ENCODE measurements at regions of chr11 and their contacts with region 1.

Region 1: GRCh38 chr11:122020902-122021301 is 95.1 kb downstream of the BLID start:
- DNase-seq: no peak
- ATAC-seq: no peak

Region 2: DNA sequence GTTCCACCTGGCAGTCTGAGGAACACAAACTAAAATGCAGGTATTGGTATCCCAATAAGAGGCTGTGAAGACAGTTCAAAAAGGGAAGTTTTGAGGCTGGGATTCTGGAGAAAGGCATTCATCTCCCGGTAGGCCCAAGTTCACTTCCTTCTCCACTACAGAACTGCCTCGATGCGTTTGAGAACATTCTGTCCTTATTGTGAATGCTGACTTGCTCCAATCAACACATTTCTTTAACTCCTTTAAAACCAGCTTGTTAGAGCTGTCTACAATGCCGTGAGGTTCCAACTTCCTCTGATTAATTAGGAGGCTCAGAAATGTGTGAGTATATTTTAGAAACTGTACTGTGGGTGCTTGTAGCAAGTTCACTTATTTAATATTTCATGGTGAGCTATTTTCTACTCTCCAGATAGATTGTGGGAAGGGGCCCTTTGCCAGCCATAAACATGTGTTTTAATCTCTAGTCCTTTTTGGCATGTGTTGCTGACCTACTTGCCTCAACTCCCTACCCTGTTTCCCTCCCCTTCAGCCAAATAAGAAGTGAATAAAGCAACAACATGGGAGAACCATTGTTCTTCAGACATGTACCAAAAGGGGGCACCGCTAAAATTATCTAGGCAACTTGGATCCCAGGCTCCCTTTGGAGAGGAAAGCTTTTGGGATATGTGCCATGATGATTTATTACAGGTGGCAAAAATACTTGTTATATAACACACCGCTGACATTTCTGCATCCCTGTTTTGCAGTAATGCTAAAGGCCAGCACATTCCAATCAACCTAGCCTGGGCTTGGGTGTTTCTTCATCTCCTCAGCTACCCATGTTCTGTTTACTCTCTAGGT is 150.5 kb before region 1 on chr11:
- intact Hi-C with region 1: no loop called
- DNase-seq: no peak
- ATAC-seq: peak; percentile 77

Region 3: DNA sequence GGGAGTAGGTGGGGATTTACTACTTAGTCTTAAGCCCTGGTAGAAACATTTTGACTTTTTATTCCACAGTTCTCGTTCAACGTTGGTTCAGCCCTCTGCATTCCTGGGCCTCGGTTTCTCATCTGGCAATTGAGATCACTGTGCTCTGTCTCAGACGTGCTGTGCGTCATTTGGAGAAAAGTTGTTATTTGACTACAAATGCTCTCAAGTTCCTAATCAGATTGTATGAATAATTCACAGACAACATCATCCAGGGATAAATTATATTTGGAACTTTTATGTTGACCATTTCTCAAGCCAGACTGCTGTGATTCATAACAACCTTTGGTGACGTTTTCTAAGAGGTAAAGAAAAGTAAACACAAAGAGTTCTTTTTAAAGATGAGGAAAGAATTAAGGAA is 25.9 kb after region 1 on chr11:
- intact Hi-C with region 1: no loop called
- DNase-seq: no peak
- ATAC-seq: no peak

Region 4: DNA sequence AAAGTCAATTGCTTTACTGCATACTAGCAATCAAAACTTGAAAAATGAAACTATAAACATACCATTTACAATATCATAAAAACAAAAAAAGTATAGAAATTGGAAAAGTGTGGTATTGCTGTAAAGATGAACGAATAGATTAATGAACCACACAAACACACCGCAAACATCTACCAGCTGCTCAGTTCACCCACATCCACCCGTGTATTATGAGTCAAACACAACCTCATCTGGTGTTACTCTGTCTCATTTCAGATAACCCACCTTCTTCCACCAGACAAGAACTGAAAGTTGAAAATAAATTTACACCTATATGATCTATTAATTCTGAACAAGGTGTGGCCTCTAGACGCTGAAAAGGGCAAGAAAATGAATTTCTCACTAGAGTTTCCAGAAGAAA is 41.9 kb after region 1 on chr11:
- intact Hi-C with region 1: no loop called
- DNase-seq: no peak
- ATAC-seq: no peak

Region 5: GRCh38 chr11:122101625-122102291 is 80.9 kb after region 1 on chr11:
- intact Hi-C with region 1: loop called (anchors 10 kb)
- DNase-seq: peak; percentile 61
- ATAC-seq: peak; percentile 88

Region 6: DNA sequence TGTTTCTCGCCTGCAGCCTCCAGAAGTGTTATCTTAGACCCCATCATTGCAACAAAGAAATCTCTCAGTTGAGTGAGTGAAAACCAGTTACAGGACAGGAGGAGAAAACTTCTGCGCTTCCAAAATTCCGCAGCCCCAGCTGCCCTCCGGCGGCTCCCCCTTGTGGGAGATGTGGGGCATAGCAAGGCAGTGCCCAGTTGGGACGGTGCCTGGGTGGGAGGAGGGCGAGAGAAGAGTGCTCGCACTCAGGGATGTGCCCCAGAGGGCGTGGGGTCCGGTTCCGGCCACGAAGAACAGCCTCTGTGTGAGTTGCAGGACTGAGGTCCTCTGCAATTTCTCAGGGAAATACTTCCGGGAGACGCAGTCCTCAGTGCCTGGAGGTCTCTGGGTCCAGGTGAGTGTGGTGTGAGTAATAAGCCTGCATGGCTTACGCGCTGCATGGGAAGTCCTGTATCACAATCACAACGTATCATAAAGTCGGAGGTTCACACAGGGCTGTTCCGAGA is 182.1 kb after region 1 on chr11:
- intact Hi-C with region 1: loop called (anchors 5 kb)
- DNase-seq: peak; percentile 80
- ATAC-seq: peak; percentile 91